ENCODE measurements at regions of chrX and their contacts with region 1.

Region 1: GRCh38 chrX:1860936-1861594 is 246.2 kb downstream of the ASMT start:
- DNase-seq: no peak
- ATAC-seq: no peak

Region 2: GRCh38 chrX:1841746-1842145 is 19.3 kb before region 1 on chrX:
- intact Hi-C with region 1: no loop called
- DNase-seq: no peak
- ATAC-seq: no peak

Region 3: DNA sequence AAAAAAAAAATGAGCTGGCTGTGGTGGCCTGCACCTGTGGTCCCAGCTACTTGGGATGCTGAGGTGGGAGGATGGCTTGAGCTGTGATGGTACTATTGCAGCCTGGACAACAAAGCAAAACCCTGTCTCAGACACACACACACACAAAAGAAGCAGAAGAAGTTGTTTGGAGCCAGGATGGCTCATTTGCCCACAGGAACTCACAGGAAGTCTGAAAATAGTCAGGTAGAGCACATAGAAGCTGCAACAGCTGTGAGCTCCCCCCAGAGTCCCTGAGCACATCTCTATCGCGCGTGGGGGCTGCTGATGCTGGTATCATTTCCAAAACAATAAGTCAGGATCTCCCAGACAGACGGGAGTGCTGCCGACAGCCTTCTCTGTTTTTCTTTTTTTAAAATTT is 653.1 kb after region 1 on chrX:
- intact Hi-C with region 1: loop called (anchors 5 kb)
- DNase-seq: no peak
- ATAC-seq: no peak

Measured in sciatic nerve (tissue), 2 donors.